Psoas muscle (tissue), 8 donors: ENCODE measurements at regions of chr4 and their contacts with region 1.

Region 1: GRCh38 chr4:47914220-47914925 is at the start of gene NFXL1:
- DNase-seq: peak; percentile 98
- ATAC-seq: peak; percentile 99 to 100 (median 100)
- H3K4me3 ChIP-seq: peak within 1 kb of the TSS; percentile 85
- H3K27ac ChIP-seq: peak within 1 kb of the TSS; percentile 78
- H3K4me1 ChIP-seq: peaks cover 4% of the 10 kb centered on the region
- H3K27me3 ChIP-seq: no peaks in the 10 kb centered on the region
- CTCF ChIP-seq: no peak
- total RNA-seq, gene NFXL1: 4.4 to 6.0 (median 5.4) TPM

Region 2: GRCh38 chr4:48005781-48006180 is 91.4 kb after region 1 on chr4:
- intact Hi-C with region 1: no loop called
- DNase-seq: no peak
- ATAC-seq: no peak
- H3K4me3 ChIP-seq: no peak overlapping the region
- H3K27ac ChIP-seq: no peak overlapping the region
- H3K4me1 ChIP-seq: no peaks in the 10 kb centered on the region
- H3K27me3 ChIP-seq: no peaks in the 10 kb centered on the region
- CTCF ChIP-seq: no peak

Region 3: GRCh38 chr4:48269861-48270522 is 355.6 kb after region 1 on chr4:
- intact Hi-C with region 1: loop called in 1 of 2 experiments (anchors 10 kb)
- DNase-seq: peak; percentile 94 to 95
- ATAC-seq: peak; percentile 98
- H3K4me3 ChIP-seq: peak overlapping the region; percentile 82
- H3K27ac ChIP-seq: peak overlapping the region; percentile 90
- H3K4me1 ChIP-seq: peaks cover 6% of the 10 kb centered on the region
- H3K27me3 ChIP-seq: no peaks in the 10 kb centered on the region
- CTCF ChIP-seq: peak; percentile 12

Region 4: DNA sequence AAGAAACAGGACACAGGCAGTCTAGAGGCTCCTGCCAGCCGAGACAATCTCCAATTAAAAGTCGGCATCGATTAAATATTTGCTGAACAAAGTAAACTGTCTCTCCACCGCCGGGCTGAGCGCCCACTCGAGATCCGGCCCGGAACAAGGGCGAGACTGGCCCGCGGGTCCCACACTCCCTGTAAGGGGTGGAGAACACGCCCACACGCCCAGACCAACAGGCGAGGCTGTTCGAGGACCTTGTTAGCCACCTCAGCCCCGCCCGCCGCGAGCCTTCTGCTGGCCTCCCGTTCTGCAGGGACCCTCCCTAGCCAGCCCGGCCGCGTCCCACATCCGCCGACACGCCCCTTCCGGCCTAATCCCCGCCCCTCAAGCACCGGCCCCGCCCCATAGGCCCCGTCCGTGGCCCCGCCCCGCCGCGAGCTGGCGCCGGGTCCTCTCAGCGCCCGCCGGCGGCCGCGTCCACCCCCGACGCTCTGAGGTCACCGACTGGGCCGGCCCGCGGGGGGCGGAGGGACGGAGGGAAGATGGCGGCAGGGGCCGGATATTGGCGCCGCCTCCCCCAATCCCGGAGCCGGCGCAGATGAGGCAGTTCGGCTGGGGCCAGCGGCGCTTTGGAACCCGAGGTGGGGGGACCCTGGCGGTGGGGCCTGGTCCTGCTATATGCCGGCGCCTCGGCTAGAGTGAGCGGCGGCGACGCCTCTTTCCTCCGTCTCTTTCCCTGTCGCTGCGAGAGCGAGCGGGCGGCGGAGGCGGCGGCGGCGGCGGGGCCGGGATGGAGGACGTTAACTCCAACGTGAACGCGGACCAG is 426.8 kb after region 1 on chr4 and contains the start of gene SLAIN2:
- intact Hi-C with region 1: loop called in 1 of 2 experiments (anchors 5 kb)
- DNase-seq: peak; percentile 99 to 100
- ATAC-seq: peak; percentile 92 to 96 (median 94)
- H3K4me3 ChIP-seq: peak within 1 kb of the TSS; percentile 95
- H3K27ac ChIP-seq: peak within 1 kb of the TSS; percentile 98
- H3K4me1 ChIP-seq: peaks cover 59% of the 10 kb centered on the region
- H3K27me3 ChIP-seq: no peaks in the 10 kb centered on the region
- CTCF ChIP-seq: peak; percentile 35
- total RNA-seq, gene SLAIN2: 157 to 204 (median 191) TPM